K562 (cell line): ENCODE measurements at regions of chr3 and their contacts with region 1.

Region 1: GRCh38 chr3:45092132-45093031 is 53.8 kb downstream of the CDCP1 start:
- DNase-seq: peak; percentile 61 to 95 (median 77)
- ATAC-seq: peak; percentile 85
- H3K4me3 ChIP-seq: no peak overlapping the region
- H3K27ac ChIP-seq: peak overlapping the region; percentile 72
- H3K4me1 ChIP-seq: peaks cover 28 to 57% of the 10 kb centered on the region in 2 experiments
- H3K27me3 ChIP-seq: no peaks in the 10 kb centered on the region
- CTCF ChIP-seq: peak in 2 of 3 experiments; percentile 40 to 70; a peak in 4 of 6 replicates
- EP300 ChIP-seq: peak; percentile 96
- POLR2A ChIP-seq: no peak
- RAD21 ChIP-seq: peak; percentile 71 to 80

Region 2: DNA sequence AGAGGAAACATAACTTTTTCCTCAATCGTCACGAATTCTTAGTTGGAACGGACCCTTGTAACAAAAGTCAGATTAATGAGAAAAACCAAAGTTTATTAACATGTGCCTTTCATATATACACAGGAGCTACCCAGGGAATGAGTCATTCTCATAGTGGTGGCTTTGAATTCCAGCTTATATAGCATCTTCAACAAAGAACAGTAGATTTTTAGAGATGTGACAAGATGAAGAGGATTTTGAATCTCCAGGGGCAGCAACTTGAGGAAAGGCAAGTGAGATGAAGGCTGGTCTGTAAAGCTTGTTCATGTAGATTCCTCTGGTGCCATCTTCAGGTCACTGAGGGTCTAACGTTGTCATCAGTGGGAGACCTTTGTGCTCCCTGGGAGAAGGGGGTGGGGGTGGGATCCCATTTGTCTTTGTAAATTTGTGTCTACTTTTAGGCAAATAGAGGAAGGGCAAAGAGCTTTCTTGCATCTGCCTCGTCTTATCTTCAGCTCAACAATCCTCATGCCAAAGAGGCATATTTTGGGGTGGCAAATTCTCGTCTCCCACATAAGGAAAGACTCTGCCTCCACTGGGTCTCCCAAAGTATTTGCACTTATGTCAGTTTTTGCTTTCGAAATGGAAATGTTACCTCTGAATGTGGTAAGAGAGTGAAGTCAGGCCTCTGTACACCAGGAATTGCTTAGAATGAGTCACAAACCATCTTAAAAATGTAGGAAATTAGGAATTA is 36.8 kb before region 1 on chr3:
- CTCF ChIA-PET with region 1: no interaction called
- POLR2A ChIA-PET with region 1: interaction called, 4 read pairs
- in situ Hi-C with region 1: no loop called
- intact Hi-C with region 1: loop called (anchors 2 kb)
- DNase-seq: peak; percentile 58 to 89 (median 68)
- ATAC-seq: peak; percentile 82
- H3K4me3 ChIP-seq: no peak overlapping the region
- H3K27ac ChIP-seq: peak overlapping the region; percentile 32; the same call in 2 of the 3 replicates
- H3K4me1 ChIP-seq: peaks cover 21 to 74% of the 10 kb centered on the region in 2 experiments
- H3K27me3 ChIP-seq: no peaks in the 10 kb centered on the region
- CTCF ChIP-seq: peak; percentile 64 to 82 (median 73); a peak in 5 of 6 replicates
- EP300 ChIP-seq: no peak
- POLR2A ChIP-seq: no peak
- RAD21 ChIP-seq: peak; percentile 72 to 79

Region 3: DNA sequence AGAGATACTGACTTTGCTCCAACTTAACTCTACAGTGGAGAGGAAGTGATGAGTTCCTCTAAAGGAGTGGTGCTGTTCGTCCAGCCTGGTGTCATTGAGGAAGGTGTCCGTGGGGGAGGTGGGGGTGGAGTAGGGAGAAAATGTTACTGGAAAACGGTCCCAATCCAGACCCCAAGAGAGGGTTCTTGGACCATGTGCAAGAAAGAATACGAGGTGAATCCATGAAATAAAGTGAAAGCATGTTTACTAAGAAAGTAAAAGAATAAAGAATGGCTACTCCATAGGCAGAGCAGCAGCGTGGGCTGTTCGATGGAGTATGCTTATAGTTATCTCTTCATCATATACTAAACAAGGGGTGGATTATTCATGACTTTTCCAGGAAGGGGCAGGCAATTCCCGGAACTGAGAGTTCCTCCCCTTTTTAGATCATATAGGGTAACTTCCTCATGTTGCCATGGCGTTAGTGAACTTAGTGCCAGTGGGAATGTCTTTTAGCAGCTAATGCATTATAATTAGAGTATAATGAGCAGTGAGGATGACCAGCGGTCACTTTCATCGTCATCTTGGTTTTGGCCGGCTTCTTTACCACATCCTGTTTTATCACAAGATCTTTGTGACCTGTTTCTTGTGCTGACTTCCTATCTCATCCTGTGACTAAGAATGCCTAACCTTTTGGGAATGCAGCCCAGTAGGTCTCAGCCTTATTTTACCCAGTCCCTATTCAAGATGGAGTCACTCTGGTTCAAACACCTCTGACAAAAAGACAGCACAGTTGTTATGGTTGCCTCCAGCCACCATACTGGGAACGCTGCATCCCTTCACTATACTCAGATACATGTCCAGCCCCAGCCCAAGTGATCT is 27.6 kb before region 1 on chr3:
- CTCF ChIA-PET with region 1: no interaction called
- POLR2A ChIA-PET with region 1: no interaction called
- in situ Hi-C with region 1: no loop called
- intact Hi-C with region 1: loop called (anchors 1 kb)
- DNase-seq: peak; percentile 58 to 99 (median 70)
- ATAC-seq: peak; percentile 73
- H3K4me3 ChIP-seq: peak overlapping the region; percentile 12; the same call in 1 of the 2 replicates
- H3K27ac ChIP-seq: peak overlapping the region; percentile 94
- H3K4me1 ChIP-seq: peaks cover 25 to 68% of the 10 kb centered on the region in 2 experiments
- H3K27me3 ChIP-seq: no peaks in the 10 kb centered on the region
- CTCF ChIP-seq: no peak
- EP300 ChIP-seq: peak; percentile 85
- POLR2A ChIP-seq: peak; percentile 92
- RAD21 ChIP-seq: peak; percentile 9 to 92; a peak in 3 of 4 replicates

Region 4: GRCh38 chr3:45105855-45106671 is 13.7 kb after region 1 on chr3:
- CTCF ChIA-PET with region 1: no interaction called
- POLR2A ChIA-PET with region 1: interaction called, 5 read pairs
- in situ Hi-C with region 1: no loop called
- intact Hi-C with region 1: loop called (anchors 1 kb)
- DNase-seq: peak; percentile 52 to 75 (median 60)
- ATAC-seq: peak; percentile 55
- H3K4me3 ChIP-seq: no peak overlapping the region
- H3K27ac ChIP-seq: peak overlapping the region; percentile 84
- H3K4me1 ChIP-seq: peaks cover 30 to 78% of the 10 kb centered on the region in 2 experiments
- H3K27me3 ChIP-seq: no peaks in the 10 kb centered on the region
- CTCF ChIP-seq: no peak
- EP300 ChIP-seq: peak; percentile 79
- POLR2A ChIP-seq: no peak
- RAD21 ChIP-seq: peak; percentile 27 to 33; a peak in 2 of 4 replicates

Region 5: GRCh38 chr3:45167011-45167911 is 74.9 kb after region 1 on chr3:
- CTCF ChIA-PET with region 1: no interaction called
- POLR2A ChIA-PET with region 1: no interaction called
- in situ Hi-C with region 1: no loop called
- intact Hi-C with region 1: loop called (anchors 1 kb)
- DNase-seq: peak; percentile 87 to 96 (median 88)
- ATAC-seq: peak; percentile 95
- H3K4me3 ChIP-seq: no peak overlapping the region
- H3K27ac ChIP-seq: peak overlapping the region; percentile 59
- H3K4me1 ChIP-seq: peaks cover 12 to 59% of the 10 kb centered on the region in 2 experiments
- H3K27me3 ChIP-seq: no peaks in the 10 kb centered on the region
- CTCF ChIP-seq: peak in 2 of 3 experiments; percentile 3 to 11; a peak in 1 of 6 replicates
- EP300 ChIP-seq: peak; percentile 53; the same call in 1 of the 2 replicates
- POLR2A ChIP-seq: peak; percentile 75
- RAD21 ChIP-seq: peak in 1 of 2 experiments; percentile 48; a peak in 3 of 4 replicates